SK-N-SH (cell line): ENCODE measurements at regions of chr10 and their contacts with region 1.

Region 1: DNA sequence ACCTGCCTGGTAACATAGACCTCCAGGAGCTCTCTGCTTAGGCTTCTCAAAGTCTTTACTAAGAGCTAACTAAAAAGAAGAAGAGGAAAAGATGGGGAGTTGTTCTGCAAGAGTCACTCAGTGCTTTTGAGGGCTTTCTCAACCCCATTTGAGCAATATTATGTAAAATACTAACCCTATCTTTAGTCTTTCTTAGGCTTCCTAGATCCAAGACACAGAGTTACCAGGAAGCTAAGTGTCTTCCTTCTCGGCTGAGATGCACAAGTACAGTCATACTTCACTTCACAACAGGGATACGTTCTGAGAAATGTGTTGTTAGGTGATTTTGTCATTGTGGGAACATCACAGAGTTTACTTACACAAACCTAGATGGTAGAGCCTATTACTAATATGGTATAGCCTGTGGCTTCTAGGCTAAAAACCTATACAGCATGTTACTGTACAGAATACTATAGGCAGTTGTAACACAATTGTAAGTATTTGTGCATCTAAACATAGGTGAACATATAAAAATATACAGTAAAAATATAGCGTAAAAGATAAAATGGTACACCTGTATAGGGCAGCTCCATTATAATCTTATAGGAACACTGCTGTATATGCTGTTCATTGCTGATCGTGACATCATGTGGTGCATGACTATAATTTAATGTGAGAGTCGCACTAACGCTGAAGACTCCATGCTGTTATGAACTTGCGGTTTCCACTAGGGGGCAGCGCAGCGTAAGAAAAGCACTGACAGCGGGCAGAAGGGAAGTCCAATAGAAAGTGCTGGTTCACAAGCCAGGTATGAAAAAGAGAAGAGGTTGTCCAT is 16.3 kb downstream of the ANKRD22 start:
- DNase-seq: peak; percentile 64
- H3K4me3 ChIP-seq: no peak overlapping the region
- H3K27ac ChIP-seq: no peak overlapping the region
- H3K4me1 ChIP-seq: peaks cover 0 to 2% of the 10 kb centered on the region in 2 experiments; a peak in 1 of 4 replicates
- H3K27me3 ChIP-seq: no peaks in the 10 kb centered on the region
- CTCF ChIP-seq: peak; percentile 94
- EP300 ChIP-seq: no peak
- RAD21 ChIP-seq: peak; percentile 99

Region 2: GRCh38 chr10:88565072-88565471 is 270.2 kb before region 1 on chr10:
- CTCF ChIA-PET with region 1: interaction called, 29 read pairs
- POLR2A ChIA-PET with region 1: no interaction called
- DNase-seq: peak; percentile 22
- H3K4me3 ChIP-seq: no peak overlapping the region
- H3K27ac ChIP-seq: no peak overlapping the region
- H3K4me1 ChIP-seq: 0 out of 4 replicates have a peak, but pooled peaks cover 0 to 3% of the 10 kb centered on the region in 2 experiments
- H3K27me3 ChIP-seq: no peaks in the 10 kb centered on the region
- CTCF ChIP-seq: peak; percentile 76
- EP300 ChIP-seq: no peak
- RAD21 ChIP-seq: peak; percentile 87

Region 3: GRCh38 chr10:88851706-88852105 is 16.4 kb after region 1 on chr10 and contains the start of gene ANKRD22:
- CTCF ChIA-PET with region 1: interaction called, 48 read pairs
- POLR2A ChIA-PET with region 1: no interaction called
- DNase-seq: no peak
- H3K4me3 ChIP-seq: no peak within 1 kb of the TSS
- H3K27ac ChIP-seq: no peak within 1 kb of the TSS
- H3K4me1 ChIP-seq: peaks cover 0 to 3% of the 10 kb centered on the region in 2 experiments; a peak in 1 of 4 replicates
- H3K27me3 ChIP-seq: no peaks in the 10 kb centered on the region
- CTCF ChIP-seq: no peak
- EP300 ChIP-seq: no peak
- RAD21 ChIP-seq: no peak
- polyA plus RNA-seq, gene ANKRD22: 0.15 TPM in 2 replicates

Region 4: DNA sequence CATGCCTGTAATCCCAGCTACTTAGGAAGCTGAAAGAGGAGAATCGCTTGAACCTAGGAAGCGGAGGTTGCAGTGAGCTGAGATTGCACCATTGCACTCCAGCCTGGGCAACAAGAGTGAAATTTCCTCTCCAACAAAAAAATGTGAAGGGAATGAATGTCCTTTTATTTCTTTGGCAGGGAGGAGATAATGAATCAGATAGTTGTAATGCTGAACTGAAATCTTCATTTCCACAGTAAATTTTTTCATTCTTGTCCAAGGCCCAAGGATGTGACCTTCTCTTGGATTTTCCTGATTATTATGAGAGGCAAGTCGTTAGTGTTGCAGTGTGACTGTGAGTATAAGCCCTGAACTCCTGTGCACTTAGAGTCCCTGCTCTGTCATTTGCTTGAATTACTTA is 58.3 kb after region 1 on chr10:
- CTCF ChIA-PET with region 1: interaction called, 10 read pairs
- POLR2A ChIA-PET with region 1: no interaction called
- DNase-seq: no peak
- H3K4me3 ChIP-seq: peak overlapping the region in 1 of 2 experiments; percentile 31; a peak in 1 of 4 replicates
- H3K27ac ChIP-seq: peak overlapping the region; percentile 58 to 77; a peak in 3 of 4 replicates
- H3K4me1 ChIP-seq: peaks cover 19 to 88% of the 10 kb centered on the region in 2 experiments
- H3K27me3 ChIP-seq: no peaks in the 10 kb centered on the region
- CTCF ChIP-seq: no peak
- EP300 ChIP-seq: peak in 1 of 2 experiments; percentile 51; a peak in 1 of 4 replicates
- RAD21 ChIP-seq: no peak

Region 5: GRCh38 chr10:88944813-88945212 is 109.5 kb after region 1 on chr10:
- CTCF ChIA-PET with region 1: interaction called, 41 read pairs
- POLR2A ChIA-PET with region 1: no interaction called
- DNase-seq: no peak
- H3K4me3 ChIP-seq: no peak overlapping the region
- H3K27ac ChIP-seq: no peak overlapping the region
- H3K4me1 ChIP-seq: peaks cover 6 to 8% of the 10 kb centered on the region in 2 experiments; a peak in 3 of 4 replicates
- H3K27me3 ChIP-seq: no peaks in the 10 kb centered on the region
- CTCF ChIP-seq: no peak
- EP300 ChIP-seq: no peak
- RAD21 ChIP-seq: no peak

Region 6: DNA sequence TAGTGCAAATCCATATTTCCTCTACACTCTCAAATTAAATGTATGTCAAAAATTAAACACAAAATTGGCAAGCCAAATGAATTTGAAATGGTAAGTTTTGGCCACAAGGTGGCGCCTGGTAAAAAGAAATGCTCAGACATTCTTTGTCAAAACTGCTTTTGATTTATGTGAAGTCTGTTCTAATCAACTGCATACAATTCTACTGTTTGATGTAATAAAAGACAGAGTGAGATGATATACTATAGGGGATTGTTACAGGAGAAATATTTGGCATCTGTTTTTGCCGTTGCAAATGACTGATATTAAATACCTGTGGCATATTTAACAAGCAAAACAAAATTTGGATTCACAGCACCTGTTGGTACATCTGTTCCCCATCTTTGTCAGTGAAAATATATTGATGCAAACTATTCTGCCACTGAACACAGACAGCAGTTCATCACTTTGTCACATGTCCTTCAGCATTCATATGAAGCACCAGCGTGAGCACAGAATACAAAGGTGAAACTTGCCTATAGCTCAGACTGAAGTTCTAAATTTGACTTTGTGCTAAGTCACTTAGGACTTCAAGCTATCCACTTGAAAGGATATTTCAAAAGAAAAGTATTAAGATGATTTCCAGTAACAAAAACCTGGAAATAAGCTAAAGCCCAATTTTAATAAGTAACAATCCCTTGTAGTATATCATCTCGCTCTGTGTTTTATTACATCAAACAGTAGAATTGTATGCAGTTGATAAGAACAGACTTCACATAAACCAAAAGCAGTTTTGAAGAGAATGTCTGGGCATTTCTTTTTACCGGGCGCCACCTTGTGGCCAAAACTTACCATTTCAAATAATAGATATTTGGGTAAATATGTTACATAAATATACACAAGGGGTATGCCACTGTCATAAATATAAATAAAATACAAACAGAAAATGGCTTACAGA is 382.0 kb after region 1 on chr10:
- CTCF ChIA-PET with region 1: interaction called, 24 read pairs
- POLR2A ChIA-PET with region 1: no interaction called
- DNase-seq: peak; percentile 30
- H3K4me3 ChIP-seq: no peak overlapping the region; a peak in 1 of 4 replicates
- H3K27ac ChIP-seq: peak overlapping the region; percentile 30 to 55
- H3K4me1 ChIP-seq: peaks cover 4 to 14% of the 10 kb centered on the region in 2 experiments; a peak in 3 of 4 replicates
- H3K27me3 ChIP-seq: no peaks in the 10 kb centered on the region
- CTCF ChIP-seq: peak; percentile 91
- EP300 ChIP-seq: no peak
- RAD21 ChIP-seq: peak; percentile 78